Endothelial cell of umbilical vein (primary cell): ENCODE measurements at regions of chr14 and their contacts with region 1.

Region 1: DNA sequence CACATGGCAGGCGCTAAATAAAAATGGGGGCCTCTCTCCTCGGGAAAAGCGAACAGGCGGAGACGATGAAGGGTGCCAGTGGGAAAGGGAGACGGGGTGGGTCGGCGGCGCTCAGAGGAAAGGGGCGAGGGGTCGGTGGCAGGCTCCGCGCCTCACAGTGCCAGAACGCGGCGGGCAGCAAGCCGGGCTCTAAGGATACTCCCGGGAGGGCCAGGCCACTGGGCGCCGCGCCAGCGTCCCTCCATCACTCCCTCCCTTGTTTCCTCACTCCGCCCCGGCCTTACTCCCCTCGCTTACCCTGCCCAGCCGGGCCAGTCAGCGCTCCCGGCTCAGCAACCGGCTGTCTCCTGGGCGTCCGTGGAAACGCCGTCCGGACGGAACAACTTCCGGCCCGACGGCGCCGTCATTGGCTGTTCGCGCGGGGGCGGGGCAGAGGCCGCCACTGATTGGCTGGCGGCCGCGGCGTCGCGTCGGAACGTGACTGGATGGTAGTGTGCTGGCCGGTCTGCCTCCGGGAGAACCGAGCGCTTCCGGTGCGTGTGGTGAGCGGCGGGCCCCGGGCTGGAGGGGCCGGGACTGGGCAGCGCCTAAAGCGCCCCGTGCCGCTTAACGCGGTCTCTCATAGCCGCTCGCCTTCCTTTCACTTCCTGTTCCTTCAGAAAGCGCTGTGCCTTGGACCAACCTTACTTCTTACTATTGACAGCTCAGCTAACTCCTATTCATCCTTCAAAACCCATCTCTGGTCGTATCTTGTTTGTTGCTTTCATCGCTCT is 53.0 kb downstream of the SLC25A47 start:
- DNase-seq: peak; percentile 98
- H3K4me3 ChIP-seq: peak within 1 kb of the TSS; percentile 62 to 94 (median 64)
- H3K27ac ChIP-seq: peak within 1 kb of the TSS; percentile 88
- H3K4me1 ChIP-seq: peaks cover 29% of the 10 kb centered on the region
- H3K27me3 ChIP-seq: no peaks in the 10 kb centered on the region
- CTCF ChIP-seq: no peak
- POLR2A ChIP-seq: peak; percentile 58

Region 2: DNA sequence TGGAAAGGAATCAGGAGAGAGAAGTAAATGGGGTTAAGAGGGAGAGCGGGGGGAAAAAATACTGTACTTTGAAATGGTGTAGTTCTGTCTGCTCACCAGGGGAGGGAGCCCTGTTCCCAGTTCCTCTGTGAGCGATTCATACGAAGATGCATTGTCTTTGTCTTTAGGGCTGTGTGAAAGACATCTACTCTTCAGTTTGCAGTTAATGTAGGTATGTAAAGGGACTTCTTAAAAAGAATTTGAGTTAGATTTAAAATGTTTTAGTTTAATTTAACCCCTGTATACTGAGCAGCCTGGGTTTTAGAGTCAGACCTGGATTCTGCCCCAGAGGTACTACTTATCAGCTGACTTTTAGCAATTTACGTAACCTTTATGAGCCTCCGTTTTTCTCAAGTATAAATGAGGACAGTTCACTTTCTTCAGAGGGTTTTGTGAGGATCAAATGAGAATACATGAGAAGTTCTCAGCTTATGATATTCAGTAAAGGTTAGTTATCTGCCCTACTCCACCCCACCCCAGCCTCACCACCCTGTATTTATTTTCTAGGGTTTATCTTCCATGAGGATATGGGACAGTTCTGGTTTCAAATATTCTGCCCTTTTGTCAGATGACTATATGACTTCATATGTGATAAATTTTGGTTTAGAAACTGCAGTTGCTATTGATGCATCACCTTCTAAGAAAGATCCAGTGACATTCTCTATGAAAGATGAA is 393.5 kb before region 1 on chr14:
- CTCF ChIA-PET with region 1: no interaction called
- POLR2A ChIA-PET with region 1: no interaction called
- dilution Hi-C with region 1: no loop called
- intact Hi-C with region 1: loop called (anchors 2 kb)
- DNase-seq: peak; percentile 73
- H3K4me3 ChIP-seq: no peak overlapping the region
- H3K27ac ChIP-seq: no peak overlapping the region
- H3K4me1 ChIP-seq: peaks cover 6% of the 10 kb centered on the region
- H3K27me3 ChIP-seq: no peaks in the 10 kb centered on the region
- CTCF ChIP-seq: peak; percentile 75 to 82
- POLR2A ChIP-seq: no peak

Region 3: DNA sequence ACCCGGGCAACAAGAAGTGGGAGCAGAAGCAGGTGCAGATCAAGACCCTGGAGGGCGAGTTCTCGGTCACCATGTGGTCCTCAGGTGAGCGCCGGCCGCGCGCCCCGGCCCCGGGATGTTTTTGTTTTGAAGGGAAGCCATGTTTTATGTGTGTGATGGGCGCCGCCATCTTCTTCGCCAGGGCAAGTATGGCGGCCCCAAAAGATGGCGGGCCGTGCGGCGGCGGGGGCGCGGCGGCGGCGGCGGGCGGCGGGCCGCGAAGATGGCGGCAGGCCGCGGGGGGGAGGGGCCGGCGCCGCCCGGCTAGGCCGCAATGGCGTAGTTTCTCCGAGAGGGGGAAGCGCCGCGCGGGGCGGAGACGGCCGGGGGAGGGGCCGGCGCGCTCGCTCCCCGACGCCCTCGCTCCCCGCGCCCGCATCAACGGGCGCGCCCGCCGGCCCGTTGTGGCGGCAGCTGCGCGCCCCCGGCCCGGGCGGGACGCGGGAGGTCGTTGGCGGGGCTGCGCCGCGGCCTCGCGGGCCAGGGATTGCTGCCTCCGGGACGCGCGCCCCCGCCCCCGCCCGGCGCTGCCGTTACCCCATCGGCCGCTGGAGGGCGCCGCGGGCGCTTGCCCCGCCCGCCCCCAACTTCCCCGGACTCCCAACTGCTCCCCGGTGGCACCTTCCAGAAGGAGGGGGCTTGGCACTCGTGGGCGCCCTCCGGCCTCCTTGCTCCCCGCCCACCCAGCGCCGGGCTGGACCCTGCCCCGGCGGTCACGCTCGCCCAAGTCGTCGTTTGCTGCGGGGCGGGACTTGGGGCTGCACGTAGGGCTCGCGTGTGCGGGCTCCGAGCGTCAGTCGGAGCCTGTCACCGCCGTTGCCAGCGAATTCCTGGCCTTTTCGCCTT is 136.1 kb before region 1 on chr14:
- CTCF ChIA-PET with region 1: no interaction called
- POLR2A ChIA-PET with region 1: no interaction called
- dilution Hi-C with region 1: no loop called
- intact Hi-C with region 1: loop called (anchors 1 kb)
- DNase-seq: peak; percentile 94
- H3K4me3 ChIP-seq: peak overlapping the region; percentile 72 to 92 (median 86)
- H3K27ac ChIP-seq: peak overlapping the region; percentile 51
- H3K4me1 ChIP-seq: peaks cover 22% of the 10 kb centered on the region
- H3K27me3 ChIP-seq: no peaks in the 10 kb centered on the region
- CTCF ChIP-seq: peak; percentile 40 to 62
- POLR2A ChIP-seq: no peak

Region 4: DNA sequence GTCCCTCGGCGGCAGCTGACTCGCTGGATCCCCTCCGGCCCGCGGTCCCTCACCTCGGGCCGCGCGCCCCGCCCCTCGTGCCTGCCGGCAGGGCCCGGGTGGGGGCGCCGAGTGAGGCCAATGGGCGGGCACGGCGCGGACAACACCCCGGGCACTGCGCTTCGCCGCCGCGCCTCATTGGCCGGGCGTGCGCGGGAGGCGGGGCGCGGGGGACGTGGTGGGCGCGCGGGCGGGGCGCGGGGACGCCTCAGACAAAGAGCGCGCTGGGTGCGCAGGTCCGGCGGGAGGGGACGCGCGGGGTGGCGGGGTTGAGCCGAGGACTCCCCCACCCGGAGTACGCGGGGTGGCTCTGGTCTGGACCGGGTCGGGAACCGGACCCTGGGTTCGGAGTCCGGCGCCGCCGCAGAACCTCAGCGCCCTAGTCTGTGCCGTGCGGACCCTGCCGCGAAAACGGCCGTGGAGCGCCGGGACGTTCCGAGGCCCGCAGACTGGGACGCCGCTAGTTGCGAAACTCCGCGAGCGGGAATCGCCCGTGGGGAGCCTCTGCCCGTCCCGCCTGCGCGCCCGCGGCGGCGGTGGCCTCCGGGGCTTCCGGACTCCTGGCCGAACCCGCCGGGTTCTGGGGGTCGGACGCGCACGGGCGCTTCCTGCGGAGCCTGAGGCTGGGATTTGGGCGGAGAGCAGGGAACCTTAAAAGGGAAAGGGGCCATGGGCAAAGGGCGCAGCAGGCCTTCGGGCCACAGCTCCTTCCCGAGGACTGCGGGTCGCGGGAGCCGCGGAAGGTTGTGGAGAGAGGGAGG is 69.5 kb before region 1 on chr14 and contains the start of gene SLC25A29:
- CTCF ChIA-PET with region 1: interaction called, 17 read pairs
- POLR2A ChIA-PET with region 1: interaction called, 3 read pairs
- dilution Hi-C with region 1: no loop called
- intact Hi-C with region 1: loop called (anchors 1 kb)
- DNase-seq: peak; percentile 91
- H3K4me3 ChIP-seq: peak within 1 kb of the TSS; percentile 57 to 89 (median 64)
- H3K27ac ChIP-seq: peak within 1 kb of the TSS; percentile 62
- H3K4me1 ChIP-seq: peaks cover 21% of the 10 kb centered on the region
- H3K27me3 ChIP-seq: no peaks in the 10 kb centered on the region
- CTCF ChIP-seq: no peak
- POLR2A ChIP-seq: peak; percentile 84
- total RNA-seq, gene SLC25A29: 108 and 132 TPM in 2 replicates

Region 5: GRCh38 chr14:100341301-100342031 is 34.7 kb before region 1 on chr14:
- CTCF ChIA-PET with region 1: interaction called, 13 read pairs
- POLR2A ChIA-PET with region 1: interaction called, 6 read pairs
- dilution Hi-C with region 1: no loop called
- intact Hi-C with region 1: loop called (anchors 1 kb)
- DNase-seq: peak; percentile 98
- H3K4me3 ChIP-seq: no peak overlapping the region
- H3K27ac ChIP-seq: peak overlapping the region; percentile 76
- H3K4me1 ChIP-seq: peaks cover 14% of the 10 kb centered on the region
- H3K27me3 ChIP-seq: no peaks in the 10 kb centered on the region
- CTCF ChIP-seq: no peak
- POLR2A ChIP-seq: no peak

Region 6: GRCh38 chr14:101535232-101535631 is 1159.1 kb after region 1 on chr14:
- CTCF ChIA-PET with region 1: no interaction called
- POLR2A ChIA-PET with region 1: no interaction called
- dilution Hi-C with region 1: no loop called
- intact Hi-C with region 1: no loop called
- DNase-seq: no peak
- H3K4me3 ChIP-seq: no peak overlapping the region
- H3K27ac ChIP-seq: no peak overlapping the region
- H3K4me1 ChIP-seq: no peaks in the 10 kb centered on the region
- H3K27me3 ChIP-seq: no peaks in the 10 kb centered on the region
- CTCF ChIP-seq: no peak
- POLR2A ChIP-seq: no peak